ENCODE measurements at regions of chr4 and their contacts with region 1.

Region 1: GRCh38 chr4:152500800-152501434 is 35.0 kb downstream of the FBXW7 start:
- DNase-seq: peak; percentile 83
- H3K4me3 ChIP-seq: no peak overlapping the region
- H3K27ac ChIP-seq: no peak overlapping the region
- H3K27me3 ChIP-seq: no peaks in the 10 kb centered on the region
- CTCF ChIP-seq: peak; percentile 80

Region 2: GRCh38 chr4:151045907-151046306 is 1455.0 kb before region 1 on chr4:
- CTCF ChIA-PET with region 1: no interaction called
- POLR2A ChIA-PET with region 1: no interaction called
- DNase-seq: no peak
- H3K4me3 ChIP-seq: no peak overlapping the region
- H3K27ac ChIP-seq: no peak overlapping the region
- H3K27me3 ChIP-seq: no peaks in the 10 kb centered on the region
- CTCF ChIP-seq: no peak

Region 3: DNA sequence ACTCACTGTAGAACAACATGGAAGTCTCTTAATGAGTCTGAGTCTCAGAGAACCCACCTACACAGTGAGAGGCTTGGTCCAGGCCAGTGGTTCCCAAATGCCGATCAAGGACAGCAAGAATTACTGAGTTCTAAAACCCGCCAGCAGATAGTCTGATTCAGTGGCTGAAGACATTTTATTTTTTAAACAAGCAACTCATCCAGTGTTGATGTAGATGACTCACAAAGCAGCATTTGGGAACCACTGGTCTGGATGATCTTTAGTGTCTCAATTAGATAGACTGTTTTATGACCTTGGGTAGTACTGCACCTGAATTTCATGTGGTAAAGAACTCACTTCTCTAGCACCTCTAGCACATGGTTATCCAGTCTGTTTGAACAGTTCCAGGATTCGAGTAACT is 158.6 kb before region 1 on chr4:
- CTCF ChIA-PET with region 1: no interaction called
- POLR2A ChIA-PET with region 1: no interaction called
- DNase-seq: no peak
- H3K4me3 ChIP-seq: no peak overlapping the region
- H3K27ac ChIP-seq: no peak overlapping the region
- H3K27me3 ChIP-seq: no peaks in the 10 kb centered on the region
- CTCF ChIP-seq: no peak

Region 4: DNA sequence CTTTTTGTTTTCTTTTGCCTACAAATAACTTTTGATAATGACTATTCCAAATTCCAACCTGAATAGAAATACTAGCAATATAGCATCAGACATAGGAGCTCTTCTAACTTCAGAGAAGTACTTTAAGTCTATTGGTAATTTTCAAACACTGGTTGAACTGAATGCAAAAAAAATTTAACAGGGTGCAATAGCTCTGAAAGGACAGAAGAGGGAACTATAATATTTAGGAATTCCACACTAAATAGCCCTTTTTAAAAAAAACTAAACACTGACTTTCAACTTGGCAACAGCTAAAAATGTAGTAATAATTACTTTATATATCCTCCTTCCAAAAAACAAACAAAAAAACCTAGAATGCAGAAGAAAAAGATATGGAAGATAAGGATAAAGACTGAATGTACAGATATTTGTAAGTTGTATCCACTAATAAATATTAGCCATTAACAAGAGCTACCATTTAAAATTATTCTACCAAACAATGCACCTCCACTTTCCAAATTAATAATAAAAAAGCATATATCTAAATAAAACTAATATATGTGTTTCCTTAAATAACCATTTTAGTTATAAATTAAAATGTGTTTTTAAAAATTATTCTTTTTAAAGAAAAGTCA is 46.4 kb before region 1 on chr4:
- CTCF ChIA-PET with region 1: interaction called, 45 read pairs
- POLR2A ChIA-PET with region 1: no interaction called
- DNase-seq: no peak
- H3K4me3 ChIP-seq: no peak overlapping the region
- H3K27ac ChIP-seq: no peak overlapping the region
- H3K27me3 ChIP-seq: no peaks in the 10 kb centered on the region
- CTCF ChIP-seq: peak; percentile 72

Region 5: GRCh38 chr4:152479428-152480026 is 21.4 kb before region 1 on chr4:
- CTCF ChIA-PET with region 1: interaction called, 33 read pairs
- POLR2A ChIA-PET with region 1: no interaction called
- DNase-seq: no peak
- H3K4me3 ChIP-seq: no peak overlapping the region
- H3K27ac ChIP-seq: no peak overlapping the region
- H3K27me3 ChIP-seq: no peaks in the 10 kb centered on the region
- CTCF ChIP-seq: no peak

Region 6: GRCh38 chr4:152525873-152526272 is 25.0 kb after region 1 on chr4:
- CTCF ChIA-PET with region 1: interaction called, 12 read pairs
- POLR2A ChIA-PET with region 1: no interaction called
- DNase-seq: no peak
- H3K4me3 ChIP-seq: no peak overlapping the region
- H3K27ac ChIP-seq: no peak overlapping the region
- H3K27me3 ChIP-seq: no peaks in the 10 kb centered on the region
- CTCF ChIP-seq: no peak

Region 7: DNA sequence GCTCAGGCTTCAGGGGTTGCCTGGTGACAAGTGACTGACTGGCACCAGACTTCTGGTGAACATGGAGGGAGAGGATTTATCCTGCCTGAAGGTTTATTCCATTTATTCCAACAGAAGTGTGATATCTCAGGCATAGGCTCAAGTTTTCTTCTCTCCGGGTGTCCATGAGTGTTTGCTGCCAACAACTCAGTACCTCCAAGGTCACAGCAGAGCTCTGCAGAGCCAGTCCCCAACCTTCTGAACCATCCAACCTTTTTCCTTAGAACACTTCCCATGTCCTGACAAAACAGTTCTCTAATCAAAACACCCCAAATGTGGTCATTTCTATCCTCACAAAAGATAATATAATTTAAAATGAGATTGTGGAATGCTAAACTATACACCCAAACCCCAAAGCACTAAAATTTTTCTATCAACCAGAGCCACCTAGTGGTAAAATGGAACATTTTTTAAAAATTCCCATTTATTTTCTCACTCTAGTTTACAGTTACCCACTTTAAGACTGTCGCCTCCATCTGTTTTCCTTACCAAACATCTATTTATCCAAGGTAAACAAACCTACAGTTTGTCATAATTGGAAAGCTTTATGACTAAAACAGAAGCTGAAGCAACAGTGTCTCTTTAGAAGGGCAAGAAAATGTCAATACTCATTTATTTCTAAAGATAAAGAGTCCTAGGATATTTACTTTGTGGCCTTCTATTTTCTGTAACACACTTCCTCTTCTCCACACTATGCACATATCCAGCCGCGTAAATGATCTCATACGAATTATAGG is 139.3 kb after region 1 on chr4:
- CTCF ChIA-PET with region 1: interaction called, 270 read pairs
- POLR2A ChIA-PET with region 1: no interaction called
- DNase-seq: no peak
- H3K4me3 ChIP-seq: no peak overlapping the region
- H3K27ac ChIP-seq: no peak overlapping the region
- H3K27me3 ChIP-seq: peaks cover 3% of the 10 kb centered on the region
- CTCF ChIP-seq: peak; percentile 59

Region 8: GRCh38 chr4:153067380-153067779 is 566.5 kb after region 1 on chr4:
- CTCF ChIA-PET with region 1: no interaction called
- POLR2A ChIA-PET with region 1: no interaction called
- DNase-seq: no peak
- H3K4me3 ChIP-seq: no peak overlapping the region
- H3K27ac ChIP-seq: no peak overlapping the region
- H3K27me3 ChIP-seq: no peaks in the 10 kb centered on the region
- CTCF ChIP-seq: no peak

Region 9: DNA sequence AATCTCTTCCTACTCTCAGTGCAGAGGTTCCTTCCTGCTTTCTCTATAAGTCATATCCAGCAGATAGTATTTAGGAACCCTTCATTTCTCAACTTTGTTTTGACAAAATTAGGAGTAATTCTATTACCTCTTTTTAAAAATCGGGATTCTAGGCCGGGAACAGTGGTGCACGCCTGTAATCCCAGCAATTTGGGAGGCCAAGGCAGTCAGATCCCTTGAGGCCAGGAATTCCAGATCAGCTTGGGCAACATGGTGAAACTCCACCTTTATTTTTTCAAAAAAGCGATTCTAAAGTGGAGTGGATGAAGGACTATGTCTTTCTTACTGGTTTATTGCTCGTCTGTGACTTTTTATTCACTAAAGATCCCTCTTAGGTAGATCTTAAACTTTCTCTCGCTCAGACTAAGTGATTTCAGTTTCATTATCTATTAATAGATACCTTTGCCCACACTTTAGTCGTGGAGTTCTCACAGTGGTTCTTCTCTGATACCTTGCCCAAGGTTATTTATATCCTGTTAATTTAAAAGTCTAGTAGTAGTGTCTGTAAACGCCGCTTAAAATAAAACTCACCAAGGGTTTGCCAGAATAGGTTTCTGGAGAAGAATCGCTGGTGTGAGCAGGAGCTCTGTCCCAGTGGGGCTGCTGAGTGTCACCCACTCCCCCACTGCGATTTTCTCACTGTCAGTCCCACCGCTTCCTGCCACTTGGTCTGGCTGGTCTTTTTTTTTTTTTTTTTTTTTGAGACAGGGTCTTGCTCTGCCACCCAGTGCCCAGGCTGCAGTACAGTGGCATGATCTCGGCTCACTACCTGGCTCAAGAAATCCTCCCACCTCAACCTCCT is 938.2 kb after region 1 on chr4:
- CTCF ChIA-PET with region 1: no interaction called
- POLR2A ChIA-PET with region 1: no interaction called
- DNase-seq: no peak
- H3K4me3 ChIP-seq: no peak overlapping the region
- H3K27ac ChIP-seq: no peak overlapping the region
- H3K27me3 ChIP-seq: no peaks in the 10 kb centered on the region
- CTCF ChIP-seq: no peak